ENCODE measurements at regions of chr13 and their contacts with region 1.

Region 1: GRCh38 chr13:109846185-109846584 is 59.8 kb upstream of the IRS2 start:
- DNase-seq: no peak
- H3K4me3 ChIP-seq: no peak overlapping the region
- H3K27ac ChIP-seq: no peak overlapping the region
- H3K4me1 ChIP-seq: no peaks in the 10 kb centered on the region
- H3K27me3 ChIP-seq: peaks cover 0 to 7% of the 10 kb centered on the region in 2 donors
- CTCF ChIP-seq: no peak

Region 2: GRCh38 chr13:109715902-109716301 is 130.3 kb before region 1 on chr13:
- intact Hi-C with region 1: no loop called
- DNase-seq: peak in 1 of 2 donors; percentile 61
- H3K4me3 ChIP-seq: no peak overlapping the region
- H3K27ac ChIP-seq: no peak overlapping the region
- H3K4me1 ChIP-seq: no peaks in the 10 kb centered on the region
- H3K27me3 ChIP-seq: no peaks in the 10 kb centered on the region
- CTCF ChIP-seq: no peak

Region 3: GRCh38 chr13:109971456-109972090 is 125.4 kb after region 1 on chr13:
- intact Hi-C with region 1: loop called (anchors 5 kb)
- DNase-seq: no peak
- H3K4me3 ChIP-seq: no peak overlapping the region
- H3K27ac ChIP-seq: no peak overlapping the region
- H3K4me1 ChIP-seq: peaks cover 0 to 4% (median 0%) of the 10 kb centered on the region in 4 donors
- H3K27me3 ChIP-seq: no peaks in the 10 kb centered on the region
- CTCF ChIP-seq: no peak